Activated CD4-positive, alpha-beta T cell treated with anti-CD3 and anti-CD28 coated beads for 36 hours (primary cell): ENCODE measurements at regions of chr14 and their contacts with region 1.

Region 1: GRCh38 chr14:95128140-95128539 is 29.2 kb downstream of the DICER1 start:
- DNase-seq: no peak
- ATAC-seq: no peak
- H3K4me3 Mint-ChIP-seq: no peak overlapping the region
- H3K27ac Mint-ChIP-seq: no peak overlapping the region
- H3K4me1 Mint-ChIP-seq: peaks cover 25% of the 10 kb centered on the region
- H3K27me3 Mint-ChIP-seq: no peaks in the 10 kb centered on the region

Region 2: DNA sequence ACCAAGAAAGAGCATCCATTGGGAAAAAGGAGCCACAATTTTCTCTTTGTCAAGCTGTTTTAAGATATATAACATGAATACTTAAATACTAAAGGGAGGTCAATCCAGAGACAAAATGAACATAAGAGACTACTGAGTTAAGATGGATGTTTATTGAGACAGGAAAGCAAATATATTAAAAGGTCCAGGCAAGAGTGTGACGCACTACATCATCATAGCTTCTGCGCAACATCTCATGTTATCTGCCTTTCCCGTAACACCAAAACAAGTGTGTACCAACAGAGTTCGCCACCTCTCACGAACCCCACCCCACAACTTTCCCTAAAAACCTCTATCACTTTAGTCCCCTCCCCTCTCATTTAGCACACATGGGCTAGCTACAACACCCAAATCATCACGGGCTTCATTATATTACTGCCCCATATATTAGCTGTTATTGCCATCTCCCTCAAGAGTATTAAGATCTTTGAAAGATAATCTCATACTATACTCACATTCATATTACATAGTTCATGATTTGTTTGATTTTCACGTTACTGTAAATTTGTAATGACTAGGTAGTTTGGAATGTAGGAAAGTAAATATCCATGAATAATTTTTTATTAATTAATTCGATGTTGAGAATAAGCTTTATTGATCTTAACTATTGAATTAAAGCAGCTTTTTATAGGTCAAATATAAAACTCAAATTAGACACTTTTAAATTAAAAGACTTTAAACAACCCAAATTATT is 21.2 kb after region 1 on chr14:
- CTCF ChIA-PET with region 1: interaction called, 3 read pairs
- POLR2A ChIA-PET with region 1: no interaction called
- intact Hi-C with region 1: loop called in 1 of 2 experiments (anchors 2 kb)
- DNase-seq: no peak
- ATAC-seq: no peak
- H3K4me3 Mint-ChIP-seq: no peak overlapping the region
- H3K27ac Mint-ChIP-seq: no peak overlapping the region
- H3K4me1 Mint-ChIP-seq: peaks cover 77% of the 10 kb centered on the region
- H3K27me3 Mint-ChIP-seq: no peaks in the 10 kb centered on the region

Region 3: GRCh38 chr14:95452176-95452892 is 324.2 kb after region 1 on chr14:
- CTCF ChIA-PET with region 1: no interaction called
- POLR2A ChIA-PET with region 1: no interaction called
- intact Hi-C with region 1: no loop called
- DNase-seq: peak; percentile 26
- ATAC-seq: no peak
- H3K4me3 Mint-ChIP-seq: no peak overlapping the region
- H3K27ac Mint-ChIP-seq: no peak overlapping the region
- H3K4me1 Mint-ChIP-seq: no peaks in the 10 kb centered on the region
- H3K27me3 Mint-ChIP-seq: no peaks in the 10 kb centered on the region